ENCODE measurements at regions of chr19 and their contacts with region 1.

Region 1: DNA sequence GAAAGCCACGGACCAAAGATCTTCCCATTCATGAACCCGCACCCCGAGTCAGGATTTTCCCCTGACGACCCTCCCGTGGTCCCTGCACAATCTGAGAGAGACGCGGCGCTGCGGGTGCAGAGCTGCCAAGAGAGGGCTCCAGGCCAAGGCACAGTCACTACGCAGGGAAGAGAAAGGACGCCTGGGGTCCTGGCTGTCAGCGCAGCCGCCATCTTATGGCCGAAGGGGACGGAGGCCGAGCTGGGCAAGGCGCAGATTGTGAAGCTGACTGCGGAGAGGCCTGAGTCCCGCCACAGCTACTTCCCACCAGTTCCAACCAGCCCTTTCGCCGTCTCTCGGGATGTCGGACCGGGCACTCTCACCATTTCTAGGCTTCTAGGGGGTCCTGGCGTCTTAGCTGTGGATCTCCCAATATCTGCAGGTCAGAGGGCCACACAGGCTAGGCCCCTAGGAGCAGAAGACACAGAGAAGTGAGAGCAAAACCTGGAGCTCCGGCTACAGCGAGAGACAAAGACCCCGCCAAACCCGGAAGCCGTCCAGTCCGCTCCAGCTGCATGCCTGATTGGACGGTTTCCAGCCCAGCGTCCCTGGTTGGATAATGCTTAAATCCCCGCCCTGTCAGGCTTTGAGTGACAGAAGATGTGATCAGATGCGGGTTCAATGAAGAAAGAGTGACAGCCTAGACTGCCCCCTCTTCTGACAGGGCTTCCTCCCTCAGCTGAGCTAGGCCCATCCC is at the start of gene ZNF100:
- DNase-seq: peak; percentile 91
- H3K4me3 ChIP-seq: peak within 1 kb of the TSS; percentile 43 to 75
- H3K27ac ChIP-seq: peak within 1 kb of the TSS; percentile 72 to 78
- H3K4me1 ChIP-seq: no peaks in the 10 kb centered on the region
- H3K27me3 ChIP-seq: no peaks in the 10 kb centered on the region
- CTCF ChIP-seq: peak in 1 of 4 experiments; percentile 12
- POLR2A ChIP-seq: peak; percentile 47
- total RNA-seq, gene ZNF100: 6.4 to 7.7 TPM

Region 2: DNA sequence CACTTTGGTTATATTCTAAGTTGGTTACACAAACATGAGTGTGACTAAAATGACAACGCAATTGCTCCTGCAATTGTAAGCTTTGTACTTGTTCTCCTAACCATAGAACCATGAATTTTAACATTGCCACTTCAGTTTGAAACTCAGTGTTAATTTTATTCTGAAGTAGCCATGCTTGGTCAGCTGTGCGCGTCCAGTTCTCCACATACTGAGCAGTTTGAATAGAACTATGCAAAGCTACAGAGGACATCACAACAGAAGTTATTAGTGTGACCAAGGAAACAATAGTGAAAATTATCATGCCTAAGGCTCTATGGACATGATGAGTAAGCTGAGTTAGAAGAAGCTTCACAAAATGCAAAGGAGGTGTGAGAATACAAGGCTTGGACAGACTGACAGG is 19.7 kb after region 1 on chr19:
- intact Hi-C with region 1: no loop called
- DNase-seq: no peak
- H3K4me3 ChIP-seq: no peak overlapping the region
- H3K27ac ChIP-seq: no peak overlapping the region
- H3K4me1 ChIP-seq: no peaks in the 10 kb centered on the region
- H3K27me3 ChIP-seq: no peaks in the 10 kb centered on the region
- CTCF ChIP-seq: no peak
- POLR2A ChIP-seq: no peak

Region 3: GRCh38 chr19:21851596-21852345 is 84.5 kb after region 1 on chr19:
- intact Hi-C with region 1: loop called (anchors 10 kb)
- DNase-seq: peak; percentile 97
- H3K4me3 ChIP-seq: peak overlapping the region; percentile 54 to 58
- H3K27ac ChIP-seq: peak overlapping the region; percentile 84 to 93
- H3K4me1 ChIP-seq: no peaks in the 10 kb centered on the region
- H3K27me3 ChIP-seq: no peaks in the 10 kb centered on the region
- CTCF ChIP-seq: no peak
- POLR2A ChIP-seq: peak; percentile 34

Measured in prostate gland (tissue), 2 donors.